Activated B cell treated with CpG ODN at 0.5 μM for 24 hours (primary cell): ENCODE measurements at regions of chr6 and their contacts with region 1.

Region 1: GRCh38 chr6:63685446-63686379 is 50.1 kb downstream of the PHF3 start:
- DNase-seq: no peak
- ATAC-seq: peak; percentile 89
- H3K4me3 Mint-ChIP-seq: peak overlapping the region; percentile 13
- H3K27ac Mint-ChIP-seq: peak overlapping the region; percentile 77
- H3K4me1 Mint-ChIP-seq: peaks cover 45% of the 10 kb centered on the region
- H3K27me3 Mint-ChIP-seq: no peaks in the 10 kb centered on the region
- CTCF ChIP-seq: no peak

Region 2: DNA sequence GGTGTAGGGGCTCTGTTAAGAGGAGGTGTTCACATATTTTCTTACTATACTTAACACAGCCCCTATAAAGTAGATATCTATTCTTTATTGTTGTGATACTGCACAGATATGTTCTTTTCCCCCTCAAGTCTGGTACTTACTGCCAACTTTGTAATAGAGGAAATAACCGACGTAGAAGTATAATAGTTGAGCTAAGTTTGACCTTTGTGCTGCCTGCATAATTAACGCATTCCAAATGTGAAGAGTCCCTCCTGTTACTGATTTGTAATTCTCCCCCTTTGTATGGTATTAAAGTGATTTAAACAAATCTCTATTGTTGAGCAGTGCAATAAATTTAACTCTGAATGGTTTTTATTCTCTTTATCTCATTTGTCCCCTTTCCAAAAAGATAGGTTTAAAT is 11.1 kb before region 1 on chr6:
- CTCF ChIA-PET with region 1: no interaction called
- POLR2A ChIA-PET with region 1: no interaction called
- intact Hi-C with region 1: loop called (anchors 1 kb)
- DNase-seq: no peak
- ATAC-seq: no peak
- H3K4me3 Mint-ChIP-seq: no peak overlapping the region
- H3K27ac Mint-ChIP-seq: no peak overlapping the region
- H3K4me1 Mint-ChIP-seq: peaks cover 44% of the 10 kb centered on the region
- H3K27me3 Mint-ChIP-seq: no peaks in the 10 kb centered on the region
- CTCF ChIP-seq: no peak